IMR-90 (cell line): ENCODE measurements at regions of chr9 and their contacts with region 1.

Region 1: GRCh38 chr9:134585746-134586706 is 55.6 kb upstream of the COL5A1 start:
- DNase-seq: peak; percentile 75
- ATAC-seq: peak; percentile 99
- H3K4me3 ChIP-seq: no peak overlapping the region
- H3K27ac ChIP-seq: no peak overlapping the region
- H3K4me1 ChIP-seq: peaks cover 9% of the 10 kb centered on the region
- H3K27me3 ChIP-seq: no peaks in the 10 kb centered on the region
- CTCF ChIP-seq: peak; percentile 37
- POLR2A ChIP-seq: no peak
- RAD21 ChIP-seq: peak; percentile 56

Region 2: GRCh38 chr9:134035041-134036039 is 550.7 kb before region 1 on chr9:
- CTCF ChIA-PET with region 1: no interaction called
- POLR2A ChIA-PET with region 1: no interaction called
- dilution Hi-C with region 1: no loop called
- in situ Hi-C with region 1: no loop called
- intact Hi-C with region 1: no loop called
- DNase-seq: no peak
- ATAC-seq: no peak
- H3K4me3 ChIP-seq: no peak overlapping the region
- H3K27ac ChIP-seq: no peak overlapping the region
- H3K4me1 ChIP-seq: no peaks in the 10 kb centered on the region
- H3K27me3 ChIP-seq: no peaks in the 10 kb centered on the region
- CTCF ChIP-seq: no peak
- POLR2A ChIP-seq: no peak
- RAD21 ChIP-seq: no peak

Region 3: DNA sequence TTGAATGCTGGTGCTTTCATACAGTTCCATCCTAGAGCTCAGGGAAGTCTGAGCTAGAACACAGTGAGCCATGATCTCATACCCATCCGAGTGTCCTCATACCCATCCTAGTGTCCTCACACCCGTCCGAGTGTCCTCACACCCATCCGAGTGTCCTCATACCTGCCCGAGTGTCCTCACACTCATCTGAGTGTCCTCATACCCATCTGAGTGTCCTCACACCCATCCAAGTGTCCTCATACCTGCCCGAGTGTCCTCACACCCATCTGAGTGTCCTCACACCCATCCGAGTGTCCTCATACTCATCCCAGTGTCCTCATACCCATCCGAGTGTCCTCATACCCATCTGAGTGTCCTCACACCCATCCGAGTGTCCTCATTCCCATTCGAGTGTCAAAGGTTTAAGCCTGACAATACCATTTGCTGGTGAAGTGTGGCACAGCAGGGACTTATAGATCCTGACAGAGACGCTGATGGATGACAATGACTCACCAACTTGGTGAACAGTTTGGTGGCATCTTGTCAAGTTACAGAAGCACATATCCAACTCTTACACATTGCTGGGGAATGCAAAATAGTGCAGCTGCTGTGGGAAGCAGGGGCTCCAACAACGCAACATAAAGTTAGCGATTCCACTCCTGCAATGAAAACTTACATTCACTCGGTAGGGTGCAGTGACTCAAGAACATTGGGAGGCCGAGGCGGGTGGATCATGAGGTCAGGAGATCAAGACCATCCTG is 21.4 kb before region 1 on chr9:
- CTCF ChIA-PET with region 1: no interaction called
- POLR2A ChIA-PET with region 1: interaction called, 12 read pairs
- dilution Hi-C with region 1: no loop called
- in situ Hi-C with region 1: no loop called
- intact Hi-C with region 1: no loop called
- DNase-seq: peak; percentile 94
- ATAC-seq: peak; percentile 60
- H3K4me3 ChIP-seq: no peak overlapping the region
- H3K27ac ChIP-seq: no peak overlapping the region
- H3K4me1 ChIP-seq: peaks cover 11% of the 10 kb centered on the region
- H3K27me3 ChIP-seq: no peaks in the 10 kb centered on the region
- CTCF ChIP-seq: no peak
- POLR2A ChIP-seq: no peak
- RAD21 ChIP-seq: no peak

Region 4: DNA sequence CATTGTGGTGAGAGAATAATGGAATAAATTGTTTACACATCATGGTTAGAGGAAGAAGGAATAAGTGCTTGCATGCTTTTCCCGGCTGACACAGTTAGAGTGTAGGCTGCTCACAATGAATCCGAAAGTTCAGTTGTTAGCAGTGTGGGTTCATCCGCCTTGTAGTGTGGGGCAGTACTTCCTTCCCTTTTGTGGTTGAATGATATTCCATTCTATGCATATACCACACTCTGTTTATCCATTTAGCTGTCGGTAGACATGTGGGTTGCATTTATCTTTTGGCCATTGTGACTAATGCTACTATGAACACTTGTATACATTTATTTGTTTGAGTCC is 139.5 kb after region 1 on chr9:
- CTCF ChIA-PET with region 1: no interaction called
- POLR2A ChIA-PET with region 1: no interaction called
- dilution Hi-C with region 1: no loop called
- in situ Hi-C with region 1: no loop called
- intact Hi-C with region 1: no loop called
- DNase-seq: peak; percentile 74
- ATAC-seq: peak; percentile 59
- H3K4me3 ChIP-seq: no peak overlapping the region
- H3K27ac ChIP-seq: no peak overlapping the region
- H3K4me1 ChIP-seq: peaks cover 20% of the 10 kb centered on the region
- H3K27me3 ChIP-seq: no peaks in the 10 kb centered on the region
- CTCF ChIP-seq: no peak
- POLR2A ChIP-seq: no peak
- RAD21 ChIP-seq: no peak